PC-9 (cell line): ENCODE measurements at regions of chr2 and their contacts with region 1.

Region 1: GRCh38 chr2:238251341-238251740 is 11.5 kb upstream of the HES6 start:
- DNase-seq: no peak
- H3K4me3 ChIP-seq: no peak overlapping the region
- H3K27ac ChIP-seq: no peak overlapping the region
- H3K4me1 ChIP-seq: peaks cover 8% of the 10 kb centered on the region
- H3K27me3 ChIP-seq: no peaks in the 10 kb centered on the region
- CTCF ChIP-seq: no peak

Region 2: DNA sequence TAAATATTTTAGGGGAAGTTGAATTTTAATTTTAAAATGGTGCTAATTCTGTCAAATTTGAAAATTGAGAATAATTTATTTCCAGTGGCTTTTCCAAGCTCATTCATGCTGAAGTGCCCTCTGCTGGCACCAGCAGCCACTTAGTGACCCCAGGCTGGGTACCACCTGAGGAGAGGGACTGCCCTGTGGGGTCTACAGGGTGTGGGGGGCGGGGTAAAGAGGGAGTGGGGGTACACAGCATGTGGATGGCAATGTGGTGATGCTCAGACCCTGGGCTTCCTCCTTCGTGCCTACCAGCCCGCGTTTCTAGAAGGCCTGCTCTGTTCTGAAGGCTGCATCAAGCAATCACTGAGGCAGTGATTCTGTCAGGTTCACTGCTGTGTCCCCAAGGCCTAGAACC is 235.6 kb before region 1 on chr2:
- CTCF ChIA-PET with region 1: interaction called, 16 read pairs
- POLR2A ChIA-PET with region 1: no interaction called
- intact Hi-C with region 1: no loop called
- DNase-seq: no peak
- H3K4me3 ChIP-seq: no peak overlapping the region
- H3K27ac ChIP-seq: no peak overlapping the region
- H3K4me1 ChIP-seq: no peaks in the 10 kb centered on the region
- H3K27me3 ChIP-seq: no peaks in the 10 kb centered on the region
- CTCF ChIP-seq: peak; percentile 52

Region 3: DNA sequence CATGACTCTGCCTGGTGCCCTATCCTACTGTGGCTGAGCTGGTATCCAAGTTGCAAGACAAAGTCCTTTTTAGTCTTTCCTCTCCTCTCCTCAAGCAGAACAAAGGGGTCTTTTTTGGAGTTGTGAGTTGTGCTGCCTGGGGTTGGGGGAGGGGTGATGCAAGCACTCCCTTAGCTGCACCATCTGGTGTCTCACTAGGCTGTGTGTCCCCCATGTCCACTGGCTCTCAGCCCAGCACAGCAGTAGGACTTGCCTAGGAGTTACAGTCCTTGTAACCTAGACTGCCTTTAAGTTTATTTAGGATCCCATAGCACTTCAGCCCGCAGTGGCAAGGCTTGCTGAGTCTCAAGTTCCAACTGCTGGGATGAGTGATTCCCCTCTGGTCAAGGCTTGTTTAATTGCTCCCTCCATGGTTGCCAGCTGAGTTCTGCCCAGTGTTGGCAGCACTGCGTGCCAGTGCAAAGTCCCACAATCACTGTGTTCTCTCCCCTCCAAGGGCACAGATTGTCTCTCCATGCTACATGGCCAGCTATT is 34.6 kb before region 1 on chr2:
- CTCF ChIA-PET with region 1: no interaction called
- POLR2A ChIA-PET with region 1: no interaction called
- intact Hi-C with region 1: no loop called
- DNase-seq: no peak
- H3K4me3 ChIP-seq: no peak overlapping the region
- H3K27ac ChIP-seq: no peak overlapping the region
- H3K4me1 ChIP-seq: no peaks in the 10 kb centered on the region
- H3K27me3 ChIP-seq: peaks cover 7% of the 10 kb centered on the region; the same call in 1 of the 2 replicates
- CTCF ChIP-seq: no peak